ENCODE measurements at regions of chr4 and their contacts with region 1.

Region 1: DNA sequence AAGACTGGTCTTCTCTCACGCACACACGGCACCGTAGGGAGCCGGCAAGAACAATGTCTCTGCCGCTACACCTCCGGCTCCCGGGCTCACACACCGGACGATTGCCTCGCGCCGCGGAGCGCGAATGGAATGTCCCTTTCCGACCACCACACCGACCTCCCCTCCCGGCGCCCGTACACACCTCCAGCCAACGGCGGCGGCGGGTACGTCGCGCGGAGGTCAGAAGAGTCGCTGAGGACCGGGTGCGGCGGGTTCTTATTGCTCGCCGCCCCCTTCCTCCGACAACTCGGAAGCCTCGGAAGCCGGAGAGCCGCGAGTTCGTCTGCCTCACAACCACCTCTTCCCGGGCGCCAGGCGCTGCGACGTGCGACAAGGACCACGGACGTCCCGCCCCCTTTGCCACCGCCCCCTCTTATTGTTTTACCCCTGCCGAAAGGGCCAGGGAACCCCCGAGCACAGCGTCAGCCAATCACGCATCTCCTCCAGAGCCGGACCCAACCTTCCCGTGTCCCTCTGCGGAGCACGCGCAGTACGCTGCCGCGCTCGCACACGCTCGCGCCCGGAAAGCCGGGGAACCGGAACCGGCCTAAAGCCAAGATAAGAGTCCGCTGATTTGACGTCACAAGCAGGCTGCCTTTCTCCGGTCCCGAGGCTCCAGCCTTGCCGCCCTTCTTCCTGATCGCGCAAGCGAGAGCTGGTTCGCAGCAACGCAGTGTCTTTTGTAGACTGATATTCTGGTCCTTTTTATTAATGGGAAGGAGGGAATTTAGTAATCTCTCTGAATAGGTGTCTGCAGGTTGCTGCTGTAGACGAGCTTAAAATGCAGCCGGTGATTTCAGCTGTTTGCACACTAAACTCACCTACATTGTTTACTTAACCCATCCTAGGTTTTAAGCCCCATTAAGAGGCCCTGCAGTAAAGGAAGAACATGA is at the start of gene G3BP2:
- DNase-seq: peak; percentile 90
- ATAC-seq: peak; percentile 91
- H3K4me3 Mint-ChIP-seq: peak within 1 kb of the TSS; percentile 100
- H3K27ac Mint-ChIP-seq: peak within 1 kb of the TSS; percentile 100
- H3K4me1 Mint-ChIP-seq: peaks cover 47% of the 10 kb centered on the region
- H3K27me3 Mint-ChIP-seq: no peaks in the 10 kb centered on the region
- CTCF ChIP-seq: no peak
- total RNA-seq, gene G3BP2: 98.2 and 103 TPM in 2 replicates

Region 2: GRCh38 chr4:75630174-75630936 is 42.9 kb before region 1 on chr4 and contains the start of gene CDKL2:
- CTCF ChIA-PET with region 1: no interaction called
- POLR2A ChIA-PET with region 1: interaction called, 4 read pairs
- intact Hi-C with region 1: loop called (anchors 1 kb)
- DNase-seq: peak; percentile 83
- ATAC-seq: peak; percentile 100
- H3K4me3 Mint-ChIP-seq: peak within 1 kb of the TSS; percentile 87
- H3K27ac Mint-ChIP-seq: peak within 1 kb of the TSS; percentile 50
- H3K4me1 Mint-ChIP-seq: peaks cover 8% of the 10 kb centered on the region
- H3K27me3 Mint-ChIP-seq: no peaks in the 10 kb centered on the region
- CTCF ChIP-seq: no peak
- total RNA-seq, gene CDKL2: not detected in 2 replicates

Region 3: GRCh38 chr4:75660491-75660890 is 12.8 kb before region 1 on chr4:
- CTCF ChIA-PET with region 1: interaction called, 4 read pairs
- POLR2A ChIA-PET with region 1: interaction called, 8 read pairs
- intact Hi-C with region 1: loop called (anchors 1 kb)
- DNase-seq: no peak
- ATAC-seq: no peak
- H3K4me3 Mint-ChIP-seq: no peak overlapping the region
- H3K27ac Mint-ChIP-seq: no peak overlapping the region
- H3K4me1 Mint-ChIP-seq: peaks cover 25% of the 10 kb centered on the region
- H3K27me3 Mint-ChIP-seq: no peaks in the 10 kb centered on the region
- CTCF ChIP-seq: no peak

Region 4: GRCh38 chr4:75724066-75724866 is 51.0 kb after region 1 on chr4 and contains the start of gene USO1:
- CTCF ChIA-PET with region 1: interaction called, 20 read pairs
- POLR2A ChIA-PET with region 1: interaction called, 90 read pairs
- intact Hi-C with region 1: loop called (anchors 1 kb)
- DNase-seq: peak; percentile 99
- ATAC-seq: peak; percentile 95
- H3K4me3 Mint-ChIP-seq: peak within 1 kb of the TSS; percentile 100
- H3K27ac Mint-ChIP-seq: peak within 1 kb of the TSS; percentile 99
- H3K4me1 Mint-ChIP-seq: peaks cover 52% of the 10 kb centered on the region
- H3K27me3 Mint-ChIP-seq: no peaks in the 10 kb centered on the region
- CTCF ChIP-seq: peak; percentile 23
- total RNA-seq, gene USO1: 41.3 and 41.7 TPM in 2 replicates

Region 5: DNA sequence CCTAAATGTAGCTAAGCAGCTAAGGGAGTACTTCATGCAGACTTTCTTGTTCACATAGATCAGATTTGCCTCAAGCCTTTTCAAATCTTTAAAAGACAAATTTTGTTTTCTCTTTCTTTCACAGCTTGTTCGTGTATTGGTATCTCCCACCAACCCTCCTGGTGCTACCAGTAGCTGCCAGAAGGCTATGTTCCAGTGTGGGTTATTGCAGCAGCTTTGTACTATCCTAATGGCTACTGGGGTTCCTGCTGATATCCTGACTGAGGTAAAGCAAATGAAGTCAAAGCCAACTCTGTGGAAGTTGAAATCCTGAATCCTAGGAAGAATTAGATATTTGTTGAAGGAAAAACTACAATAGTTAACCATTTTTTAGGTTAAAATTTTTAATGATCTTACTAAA is 113.6 kb after region 1 on chr4:
- CTCF ChIA-PET with region 1: no interaction called
- POLR2A ChIA-PET with region 1: no interaction called
- intact Hi-C with region 1: no loop called
- DNase-seq: no peak
- ATAC-seq: no peak
- H3K4me3 Mint-ChIP-seq: no peak overlapping the region
- H3K27ac Mint-ChIP-seq: no peak overlapping the region
- H3K4me1 Mint-ChIP-seq: peaks cover 11% of the 10 kb centered on the region
- H3K27me3 Mint-ChIP-seq: no peaks in the 10 kb centered on the region
- CTCF ChIP-seq: no peak

Region 6: GRCh38 chr4:75948822-75949444 is 275.6 kb after region 1 on chr4:
- CTCF ChIA-PET with region 1: no interaction called
- POLR2A ChIA-PET with region 1: no interaction called
- intact Hi-C with region 1: loop called (anchors 5 kb)
- DNase-seq: no peak
- ATAC-seq: peak; percentile 86
- H3K4me3 Mint-ChIP-seq: no peak overlapping the region
- H3K27ac Mint-ChIP-seq: peak overlapping the region; percentile 77
- H3K4me1 Mint-ChIP-seq: peaks cover 26% of the 10 kb centered on the region
- H3K27me3 Mint-ChIP-seq: no peaks in the 10 kb centered on the region
- CTCF ChIP-seq: no peak

Region 7: GRCh38 chr4:75968084-75968483 is 294.8 kb after region 1 on chr4:
- CTCF ChIA-PET with region 1: no interaction called
- POLR2A ChIA-PET with region 1: no interaction called
- intact Hi-C with region 1: no loop called
- DNase-seq: no peak
- ATAC-seq: no peak
- H3K4me3 Mint-ChIP-seq: no peak overlapping the region
- H3K27ac Mint-ChIP-seq: no peak overlapping the region
- H3K4me1 Mint-ChIP-seq: no peaks in the 10 kb centered on the region
- H3K27me3 Mint-ChIP-seq: no peaks in the 10 kb centered on the region
- CTCF ChIP-seq: no peak

Region 8: DNA sequence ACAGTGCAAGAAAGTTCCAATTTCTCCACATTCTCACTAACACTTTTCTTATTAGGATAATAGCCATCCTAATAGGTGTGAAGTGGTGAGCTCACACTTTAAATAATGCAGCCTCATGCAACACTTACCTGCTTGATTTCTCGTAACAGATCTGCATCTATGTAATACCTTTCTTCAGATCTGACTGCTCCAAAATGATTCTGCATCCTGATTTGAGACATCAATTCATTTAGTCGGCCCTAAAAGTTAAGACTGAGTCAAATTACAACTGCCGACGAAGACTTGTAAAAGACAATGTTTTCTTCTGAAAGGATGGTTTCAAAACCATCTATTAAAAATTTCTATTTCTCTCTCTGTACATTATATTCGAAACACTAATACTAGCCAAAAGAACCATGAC is 444.2 kb after region 1 on chr4:
- CTCF ChIA-PET with region 1: no interaction called
- POLR2A ChIA-PET with region 1: no interaction called
- intact Hi-C with region 1: no loop called
- DNase-seq: no peak
- ATAC-seq: no peak
- H3K4me3 Mint-ChIP-seq: no peak overlapping the region
- H3K27ac Mint-ChIP-seq: no peak overlapping the region
- H3K4me1 Mint-ChIP-seq: no peaks in the 10 kb centered on the region
- H3K27me3 Mint-ChIP-seq: no peaks in the 10 kb centered on the region
- CTCF ChIP-seq: no peak

Measured in activated B cell treated with CpG ODN at 0.5 μM for 24 hours (primary cell).